ENCODE measurements at regions of chr1 and their contacts with region 1.

Region 1: DNA sequence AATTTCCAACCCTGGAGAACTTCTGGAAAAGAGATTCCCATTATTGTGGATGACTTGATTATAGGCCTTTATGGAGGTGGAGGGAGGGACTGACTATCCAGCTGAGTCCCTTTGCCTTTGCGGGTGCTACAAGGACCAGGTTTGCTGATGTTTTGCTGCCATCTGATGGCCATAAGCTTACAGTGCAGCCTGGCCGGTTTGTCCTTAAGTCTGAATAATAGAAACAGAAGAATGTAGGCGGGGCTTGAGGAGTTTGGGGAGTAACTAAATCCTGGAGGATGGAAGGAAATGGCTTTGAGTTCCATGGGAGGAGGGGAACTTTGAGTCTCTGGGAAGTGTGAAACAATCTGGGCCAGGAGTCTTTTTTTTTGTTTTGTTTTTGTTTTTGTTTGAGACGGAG is 55.7 kb upstream of the CD1D start:
- DNase-seq: peak; percentile 80 to 89 (median 87)
- ATAC-seq: peak; percentile 93 to 98 (median 96)
- H3K4me3 ChIP-seq: peak overlapping the region in 1 of 12 donors; percentile 21
- H3K27ac ChIP-seq: no peak overlapping the region
- H3K4me1 ChIP-seq: peaks cover 0 to 4% (median 0%) of the 10 kb centered on the region in 12 donors
- H3K27me3 ChIP-seq: peaks cover 0 to 9% (median 0%) of the 10 kb centered on the region in 9 donors
- CTCF ChIP-seq: peak; percentile 83 to 98 (median 91)
- POLR2A ChIP-seq: no peak

Region 2: GRCh38 chr1:157580179-157580827 is 544.7 kb before region 1 on chr1:
- intact Hi-C with region 1: loop called in 6 of 10 experiments (anchors 2 to 10 kb)
- DNase-seq: no peak
- ATAC-seq: peak in 1 of 4 donors; percentile 26
- H3K4me3 ChIP-seq: no peak overlapping the region
- H3K27ac ChIP-seq: no peak overlapping the region
- H3K4me1 ChIP-seq: no peaks in the 10 kb centered on the region
- H3K27me3 ChIP-seq: peaks cover 0 to 21% (median 0%) of the 10 kb centered on the region in 9 donors
- CTCF ChIP-seq: peak; percentile 56 to 78 (median 67)
- POLR2A ChIP-seq: no peak

Region 3: DNA sequence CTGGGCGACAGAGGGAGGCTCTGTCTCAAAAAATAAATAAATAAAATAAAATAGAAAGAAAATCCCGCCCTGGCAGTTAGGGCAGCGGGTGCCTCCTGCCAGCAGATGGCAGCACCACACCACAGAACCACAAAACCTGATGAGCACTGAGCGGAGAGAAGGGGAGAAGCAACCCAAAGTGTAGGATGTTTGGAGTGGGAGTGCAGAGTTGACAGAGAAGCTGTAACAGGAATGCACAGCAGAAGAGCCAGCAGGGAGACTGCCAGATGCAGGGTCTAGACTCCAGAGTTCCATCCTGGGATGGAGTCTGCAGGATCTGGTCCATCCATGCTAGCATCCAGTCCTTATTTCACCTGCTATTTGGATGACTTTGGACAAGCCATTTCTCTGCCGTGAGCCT is 161.3 kb before region 1 on chr1:
- intact Hi-C with region 1: loop called (anchors 1 to 5 kb)
- DNase-seq: peak; percentile 50 to 74 (median 60)
- ATAC-seq: peak; percentile 66 to 84 (median 80)
- H3K4me3 ChIP-seq: no peak overlapping the region
- H3K27ac ChIP-seq: no peak overlapping the region
- H3K4me1 ChIP-seq: peaks cover 0 to 9% (median 5%) of the 10 kb centered on the region in 12 donors
- H3K27me3 ChIP-seq: peaks cover 0 to 31% (median 0%) of the 10 kb centered on the region in 9 donors
- CTCF ChIP-seq: peak; percentile 87 to 97 (median 94)
- POLR2A ChIP-seq: no peak

Region 4: DNA sequence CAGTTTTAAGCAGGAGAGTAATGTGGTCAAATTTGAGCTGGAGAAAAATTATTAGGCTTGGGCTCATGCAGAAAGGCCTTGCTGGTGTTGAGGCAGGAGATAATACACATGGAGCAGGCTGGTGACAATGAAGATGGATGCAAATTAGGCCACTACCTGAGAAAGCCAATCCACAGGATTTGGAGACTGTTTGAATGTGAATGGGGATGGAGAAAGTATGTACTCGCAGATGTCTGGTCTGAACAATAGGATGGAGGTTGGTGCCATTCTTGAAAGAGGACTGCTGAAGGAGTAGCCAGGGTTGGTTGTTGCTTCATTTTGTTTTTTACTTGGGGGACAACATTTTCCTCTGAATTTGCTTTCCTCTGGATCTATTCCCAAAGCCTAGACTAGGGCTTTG is 139.5 kb before region 1 on chr1:
- intact Hi-C with region 1: loop called in 5 of 10 experiments (anchors 2 to 10 kb)
- DNase-seq: no peak
- ATAC-seq: no peak
- H3K4me3 ChIP-seq: no peak overlapping the region
- H3K27ac ChIP-seq: no peak overlapping the region
- H3K4me1 ChIP-seq: no peaks in the 10 kb centered on the region
- H3K27me3 ChIP-seq: peaks cover 0 to 5% (median 0%) of the 10 kb centered on the region in 9 donors
- CTCF ChIP-seq: no peak
- POLR2A ChIP-seq: no peak

Region 5: DNA sequence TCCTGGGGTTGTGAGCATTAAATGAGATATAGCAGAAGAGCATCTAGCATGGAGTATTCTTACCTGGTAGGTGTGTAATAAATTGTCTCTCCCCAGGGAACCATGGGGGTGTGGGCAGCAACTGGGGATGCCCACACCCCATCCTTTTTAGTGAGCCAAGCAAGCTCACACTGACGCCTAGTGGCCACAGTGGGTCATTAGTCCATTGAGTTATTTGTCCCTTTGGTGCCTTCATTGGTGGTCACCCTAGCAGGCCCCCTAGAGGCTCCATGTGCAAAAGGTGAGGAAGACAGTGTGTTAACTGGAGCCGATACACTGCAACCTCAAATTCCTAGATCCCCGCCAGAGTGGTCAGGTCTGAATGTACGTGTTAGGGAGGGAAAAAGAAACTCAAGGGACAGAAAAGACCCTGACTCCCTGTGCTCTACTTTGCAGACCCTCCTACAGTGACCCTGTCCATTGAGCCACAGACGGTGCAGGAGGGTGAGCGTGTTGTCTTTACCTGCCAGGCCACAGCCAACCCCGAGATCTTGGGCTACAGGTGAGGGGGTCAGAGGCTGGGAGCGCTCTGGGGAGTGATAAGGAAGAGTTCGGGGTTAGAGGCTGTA is 37.6 kb before region 1 on chr1:
- intact Hi-C with region 1: loop called in 1 of 10 experiments (anchors 5 kb)
- DNase-seq: peak in 4 of 5 donors; percentile 50 to 57 (median 52)
- ATAC-seq: peak; percentile 41 to 70 (median 62)
- H3K4me3 ChIP-seq: no peak overlapping the region
- H3K27ac ChIP-seq: no peak overlapping the region
- H3K4me1 ChIP-seq: no peaks in the 10 kb centered on the region
- H3K27me3 ChIP-seq: no peaks in the 10 kb centered on the region
- CTCF ChIP-seq: peak; percentile 78 to 90 (median 84)
- POLR2A ChIP-seq: no peak

Region 6: DNA sequence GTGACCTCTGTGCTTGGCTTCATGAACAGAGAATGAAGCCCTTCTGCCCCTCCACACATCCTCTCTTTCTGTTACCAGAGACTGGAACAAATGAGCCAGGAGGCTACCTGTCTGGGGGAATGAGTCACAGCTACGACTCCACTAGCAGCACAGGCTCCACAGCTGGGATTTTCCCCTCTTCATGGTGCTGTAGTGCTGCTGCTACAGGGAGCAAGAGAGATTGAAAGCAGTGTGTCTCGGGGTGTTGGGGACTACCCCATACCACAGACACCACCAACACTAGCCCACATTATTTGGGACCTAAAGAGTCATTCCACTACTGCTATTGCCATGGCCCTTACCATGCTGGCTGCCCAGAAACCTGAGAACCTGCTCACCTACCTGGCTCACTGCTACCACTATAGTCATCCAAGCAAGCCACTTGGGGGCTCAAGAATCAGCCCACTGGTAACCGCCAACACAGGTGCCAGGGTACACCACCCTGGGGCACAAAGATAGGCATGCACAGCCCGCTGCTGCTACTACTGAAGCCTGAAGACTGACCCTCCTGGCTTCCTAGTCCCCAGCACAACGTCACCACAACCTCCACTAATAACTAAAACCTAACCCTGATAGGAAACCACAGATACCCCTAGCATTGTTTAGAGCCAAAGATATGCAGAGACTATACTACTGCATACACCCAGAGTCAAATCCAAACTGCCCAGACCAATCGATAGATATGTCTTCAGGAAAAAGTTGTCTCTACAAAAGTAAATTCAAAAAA is 246.4 kb after region 1 on chr1:
- intact Hi-C with region 1: no loop called
- DNase-seq: no peak
- ATAC-seq: no peak
- H3K4me3 ChIP-seq: no peak overlapping the region
- H3K27ac ChIP-seq: no peak overlapping the region
- H3K4me1 ChIP-seq: no peaks in the 10 kb centered on the region
- H3K27me3 ChIP-seq: no peaks in the 10 kb centered on the region
- CTCF ChIP-seq: no peak
- POLR2A ChIP-seq: no peak

Measured in heart left ventricle (tissue), 16 donors.